ENCODE measurements at regions of chr13 and their contacts with region 1.

Region 1: GRCh38 chr13:75687150-75687763 is 51.1 kb downstream of the LMO7 start:
- DNase-seq: no peak
- ATAC-seq: no peak
- H3K4me3 ChIP-seq: no peak overlapping the region
- H3K27ac ChIP-seq: no peak overlapping the region
- H3K4me1 ChIP-seq: no peaks in the 10 kb centered on the region
- H3K27me3 ChIP-seq: no peaks in the 10 kb centered on the region
- CTCF ChIP-seq: peak in 5 of 7 experiments; percentile 16 to 39 (median 29)
- POLR2A ChIP-seq: no peak

Region 2: GRCh38 chr13:75864718-75865117 is 177.5 kb after region 1 on chr13:
- intact Hi-C with region 1: loop called (anchors 10 kb)
- DNase-seq: no peak
- ATAC-seq: no peak
- H3K4me3 ChIP-seq: no peak overlapping the region
- H3K27ac ChIP-seq: no peak overlapping the region
- H3K4me1 ChIP-seq: no peaks in the 10 kb centered on the region
- H3K27me3 ChIP-seq: no peaks in the 10 kb centered on the region
- CTCF ChIP-seq: no peak
- POLR2A ChIP-seq: no peak

Region 3: DNA sequence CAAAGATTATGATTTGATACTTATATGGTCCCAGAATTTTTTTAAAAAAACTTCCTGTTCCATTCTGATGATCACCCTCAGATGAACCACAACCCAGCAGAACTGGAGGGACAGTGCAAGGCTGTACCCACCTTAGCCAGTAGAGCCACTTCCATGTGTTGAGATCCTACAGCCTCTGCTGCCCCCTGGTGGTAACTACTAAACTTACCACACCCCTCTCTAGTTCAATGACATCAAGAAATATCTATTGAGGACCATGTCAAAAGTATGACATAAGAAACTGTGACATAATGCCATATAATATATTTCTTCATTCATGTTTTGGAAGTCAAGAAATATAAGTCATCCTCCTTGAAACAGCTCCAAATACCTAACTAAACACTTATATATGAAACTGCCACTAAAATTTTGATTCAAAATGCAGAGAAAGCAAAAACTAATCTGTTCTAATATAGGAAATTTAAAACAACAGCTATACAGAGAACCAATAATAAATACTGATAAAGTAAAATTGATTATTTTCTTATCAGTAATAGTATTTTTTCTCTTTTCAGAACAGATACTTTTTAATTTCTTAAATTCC is 786.4 kb after region 1 on chr13:
- intact Hi-C with region 1: loop called (anchors 10 kb)
- DNase-seq: peak; percentile 76 to 80 (median 80)
- ATAC-seq: peak; percentile 88
- H3K4me3 ChIP-seq: no peak overlapping the region
- H3K27ac ChIP-seq: no peak overlapping the region
- H3K4me1 ChIP-seq: no peaks in the 10 kb centered on the region
- H3K27me3 ChIP-seq: no peaks in the 10 kb centered on the region
- CTCF ChIP-seq: peak; percentile 57 to 95 (median 87)
- POLR2A ChIP-seq: no peak